Body of pancreas (tissue), 4 donors: ENCODE measurements at regions of chr15 and their contacts with region 1.

Region 1: GRCh38 chr15:50686468-50687301 is at the start of gene TRPM7:
- DNase-seq: peak; percentile 85 to 90 (median 88)
- ATAC-seq: peak; percentile 95
- H3K4me3 ChIP-seq: peak within 1 kb of the TSS; percentile 6 to 70
- H3K27ac ChIP-seq: peak within 1 kb of the TSS; percentile 76 to 95 (median 93)
- H3K4me1 ChIP-seq: peaks cover 38% of the 10 kb centered on the region
- H3K27me3 ChIP-seq: no peaks in the 10 kb centered on the region
- CTCF ChIP-seq: peak in 1 of 7 experiments; percentile 21
- POLR2A ChIP-seq: peak; percentile 77 to 90 (median 89)
- total RNA-seq, gene TRPM7: 40.9 to 43.3 TPM

Region 2: GRCh38 chr15:50765195-50765973 is 78.7 kb after region 1 on chr15 and contains the start of gene SPPL2A:
- intact Hi-C with region 1: loop called (anchors 10 kb)
- DNase-seq: peak; percentile 77 to 85 (median 80)
- ATAC-seq: peak; percentile 89
- H3K4me3 ChIP-seq: peak within 1 kb of the TSS; percentile 72 to 85
- H3K27ac ChIP-seq: peak within 1 kb of the TSS; percentile 79 to 99 (median 94)
- H3K4me1 ChIP-seq: peaks cover 50% of the 10 kb centered on the region
- H3K27me3 ChIP-seq: no peaks in the 10 kb centered on the region
- CTCF ChIP-seq: no peak
- POLR2A ChIP-seq: peak; percentile 88 to 95 (median 94)
- total RNA-seq, gene SPPL2A: 83.8 to 105 TPM